Heart right ventricle (tissue), 16 donors: ENCODE measurements at regions of chr1 and their contacts with region 1.

Region 1: GRCh38 chr1:227299241-227299627 is 19.1 kb downstream of the CDC42BPA start:
- DNase-seq: no peak
- ATAC-seq: peak in 3 of 8 donors; percentile 25 to 49 (median 41)
- H3K4me3 ChIP-seq: peak overlapping the region in 2 of 10 donors; percentile 7 to 8
- H3K27ac ChIP-seq: peak overlapping the region in 6 of 10 donors; percentile 24 to 62 (median 40)
- H3K4me1 ChIP-seq: peaks cover 0 to 47% (median 29%) of the 10 kb centered on the region in 9 donors
- H3K27me3 ChIP-seq: no peaks in the 10 kb centered on the region
- CTCF ChIP-seq: no peak

Region 2: DNA sequence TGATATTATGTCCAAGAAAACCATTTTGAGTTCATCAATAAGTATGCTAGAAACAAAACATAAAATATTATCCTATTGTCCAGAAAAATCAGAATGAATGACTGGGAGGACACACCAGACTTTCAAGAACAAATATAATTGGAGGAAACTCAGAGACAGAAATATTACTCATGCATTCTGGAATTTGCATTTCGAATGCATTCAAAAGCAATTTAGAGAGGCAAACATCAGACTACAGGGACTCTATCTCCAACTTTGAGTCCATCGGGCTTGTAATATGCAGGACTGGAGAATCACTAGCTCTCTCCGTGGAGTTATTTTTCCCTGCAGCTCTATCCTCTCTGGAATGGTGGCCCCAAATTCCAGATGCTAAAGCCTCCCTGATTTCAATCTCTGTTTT is 142.7 kb before region 1 on chr1:
- intact Hi-C with region 1: no loop called
- DNase-seq: no peak
- ATAC-seq: no peak
- H3K4me3 ChIP-seq: no peak overlapping the region
- H3K27ac ChIP-seq: no peak overlapping the region
- H3K4me1 ChIP-seq: peaks cover 0 to 33% (median 5%) of the 10 kb centered on the region in 9 donors
- H3K27me3 ChIP-seq: no peaks in the 10 kb centered on the region
- CTCF ChIP-seq: no peak

Region 3: DNA sequence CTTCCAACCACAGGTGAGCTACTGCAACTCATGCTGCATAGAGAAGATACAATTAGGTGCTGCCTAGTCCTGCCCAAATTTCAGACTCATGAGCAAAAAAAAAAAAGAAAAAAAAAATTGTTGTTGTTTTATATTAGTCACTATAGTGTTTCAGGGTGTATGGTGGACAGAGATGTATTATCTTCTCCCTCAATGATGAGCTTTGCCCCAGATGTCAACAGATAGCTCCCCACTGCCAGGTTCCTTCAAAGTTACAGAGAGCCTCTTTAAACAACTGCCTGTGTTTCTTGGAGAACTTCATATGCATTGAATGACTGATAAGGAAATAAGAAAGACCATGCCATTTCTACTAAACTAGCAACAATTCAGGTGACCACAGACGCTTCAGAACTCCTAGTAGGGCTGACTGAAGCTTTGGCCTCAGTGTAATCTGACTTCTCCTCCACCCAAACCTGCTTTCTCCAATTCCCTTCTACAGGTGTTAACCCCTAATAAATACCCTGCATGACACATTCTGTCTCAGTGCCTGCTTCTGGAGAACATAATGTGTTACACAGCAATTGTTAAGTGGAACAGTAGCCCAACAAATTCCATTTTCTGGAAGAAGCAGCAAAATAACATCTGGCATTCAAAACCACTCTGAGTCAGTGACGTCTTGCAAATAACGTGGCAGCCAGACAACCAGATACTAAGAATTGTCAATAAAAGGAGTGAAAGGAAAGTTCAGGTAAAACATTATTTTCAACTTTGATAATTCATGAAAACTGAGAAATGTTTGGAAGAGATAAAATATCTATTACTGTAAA is 128.7 kb before region 1 on chr1:
- intact Hi-C with region 1: no loop called
- DNase-seq: no peak
- ATAC-seq: no peak
- H3K4me3 ChIP-seq: no peak overlapping the region
- H3K27ac ChIP-seq: no peak overlapping the region
- H3K4me1 ChIP-seq: peaks cover 0 to 40% (median 14%) of the 10 kb centered on the region in 9 donors
- H3K27me3 ChIP-seq: no peaks in the 10 kb centered on the region
- CTCF ChIP-seq: no peak

Region 4: GRCh38 chr1:228804671-228805413 is 1505.6 kb after region 1 on chr1:
- intact Hi-C with region 1: loop called in 1 of 10 experiments (anchors 5 kb)
- DNase-seq: no peak
- ATAC-seq: peak in 2 of 8 donors; percentile 12 to 52
- H3K4me3 ChIP-seq: no peak overlapping the region
- H3K27ac ChIP-seq: peak overlapping the region in 1 of 10 donors; percentile 28
- H3K4me1 ChIP-seq: peaks cover 0 to 25% (median 0%) of the 10 kb centered on the region in 9 donors
- H3K27me3 ChIP-seq: peaks cover 0 to 25% (median 4%) of the 10 kb centered on the region in 7 donors
- CTCF ChIP-seq: no peak